Naive thymus-derived CD4-positive, alpha-beta T cell (primary cell): ENCODE measurements at regions of chr3 and their contacts with region 1.

Region 1: DNA sequence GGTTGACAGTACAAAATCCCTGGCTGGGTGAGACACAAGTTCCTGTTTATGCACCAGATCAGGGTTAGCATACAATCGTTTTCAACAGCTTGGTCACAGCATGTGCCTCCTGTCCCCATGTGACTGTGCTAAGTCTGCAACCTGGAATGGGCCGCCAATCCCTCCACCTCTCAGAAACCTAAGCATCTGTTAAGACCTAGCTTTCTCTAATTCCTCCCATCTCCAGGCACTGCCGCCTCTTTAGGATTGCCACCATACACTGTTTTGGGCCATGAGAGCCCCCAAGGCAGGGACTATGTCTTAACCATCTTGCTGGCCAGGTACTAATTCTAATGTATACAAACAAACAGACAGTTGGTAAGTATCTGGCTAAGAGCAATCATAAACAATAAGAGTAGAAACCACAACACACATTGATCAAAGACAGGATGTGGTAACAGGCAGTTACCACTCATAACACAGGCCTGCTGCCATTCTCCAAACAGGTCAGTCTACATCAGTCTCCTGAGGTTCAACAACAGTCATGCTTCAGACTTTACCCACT is 25.6 kb downstream of the SEC22C start:
- DNase-seq: peak in 8 of 9 donors; percentile 33 to 80 (median 70)
- ATAC-seq: peak; percentile 88
- H3K4me3 ChIP-seq: peak overlapping the region; percentile 4
- H3K4me3 Mint-ChIP-seq: peak overlapping the region; percentile 29 to 85 (median 55)
- H3K27ac ChIP-seq: peak overlapping the region; percentile 50
- H3K27ac Mint-ChIP-seq: peak overlapping the region; percentile 90 to 100 (median 95)
- H3K4me1 ChIP-seq: peaks cover 23 to 28% of the 10 kb centered on the region in 2 donors
- H3K4me1 Mint-ChIP-seq: peaks cover 19 to 47% (median 40%) of the 10 kb centered on the region in 7 donors
- H3K27me3 ChIP-seq: no peaks in the 10 kb centered on the region
- H3K27me3 Mint-ChIP-seq: no peaks in the 10 kb centered on the region

Region 2: GRCh38 chr3:41893977-41894376 is 662.2 kb before region 1 on chr3:
- CTCF ChIA-PET with region 1: no interaction called
- POLR2A ChIA-PET with region 1: no interaction called
- intact Hi-C with region 1: loop called in 1 of 2 experiments (anchors 2 kb)
- DNase-seq: peak in 6 of 9 donors; percentile 9 to 34 (median 17)
- ATAC-seq: no peak
- H3K4me3 ChIP-seq: no peak overlapping the region
- H3K4me3 Mint-ChIP-seq: no peak overlapping the region
- H3K27ac ChIP-seq: no peak overlapping the region
- H3K27ac Mint-ChIP-seq: no peak overlapping the region
- H3K4me1 ChIP-seq: no peaks in the 10 kb centered on the region
- H3K4me1 Mint-ChIP-seq: peaks cover 0 to 6% (median 0%) of the 10 kb centered on the region in 7 donors
- H3K27me3 ChIP-seq: no peaks in the 10 kb centered on the region
- H3K27me3 Mint-ChIP-seq: no peaks in the 10 kb centered on the region

Region 3: DNA sequence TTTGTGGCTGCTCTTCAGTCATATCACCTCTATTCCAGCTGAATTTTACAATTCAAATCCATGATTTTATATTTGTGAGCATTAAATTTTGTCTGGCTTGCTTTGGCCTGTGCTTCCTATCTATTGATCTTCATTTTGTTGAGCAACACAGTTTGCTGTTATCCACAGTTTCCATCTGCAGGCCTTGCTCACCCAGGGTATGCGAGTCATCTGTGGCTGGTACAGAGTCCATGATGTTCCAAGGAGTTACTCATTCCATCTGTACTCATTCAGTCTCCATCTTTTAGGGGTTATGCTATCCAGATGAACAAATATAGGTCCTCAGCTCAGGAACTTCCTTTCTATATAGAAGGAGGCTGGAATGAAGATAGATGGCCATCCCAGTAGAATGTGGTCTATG is 220.1 kb before region 1 on chr3:
- CTCF ChIA-PET with region 1: no interaction called
- POLR2A ChIA-PET with region 1: no interaction called
- intact Hi-C with region 1: no loop called
- DNase-seq: no peak
- ATAC-seq: no peak
- H3K4me3 ChIP-seq: no peak overlapping the region
- H3K4me3 Mint-ChIP-seq: no peak overlapping the region
- H3K27ac ChIP-seq: no peak overlapping the region
- H3K27ac Mint-ChIP-seq: no peak overlapping the region
- H3K4me1 ChIP-seq: no peaks in the 10 kb centered on the region
- H3K4me1 Mint-ChIP-seq: no peaks in the 10 kb centered on the region
- H3K27me3 ChIP-seq: no peaks in the 10 kb centered on the region
- H3K27me3 Mint-ChIP-seq: peaks cover 0 to 25% (median 0%) of the 10 kb centered on the region in 5 donors

Region 4: GRCh38 chr3:42443819-42444436 is 112.2 kb before region 1 on chr3:
- CTCF ChIA-PET with region 1: no interaction called
- POLR2A ChIA-PET with region 1: no interaction called
- intact Hi-C with region 1: loop called (anchors 1 to 5 kb)
- DNase-seq: peak; percentile 46 to 78 (median 73)
- ATAC-seq: peak; percentile 88
- H3K4me3 ChIP-seq: no peak overlapping the region
- H3K4me3 Mint-ChIP-seq: no peak overlapping the region
- H3K27ac ChIP-seq: no peak overlapping the region
- H3K27ac Mint-ChIP-seq: no peak overlapping the region
- H3K4me1 ChIP-seq: no peaks in the 10 kb centered on the region
- H3K4me1 Mint-ChIP-seq: peaks cover 0 to 3% (median 0%) of the 10 kb centered on the region in 7 donors
- H3K27me3 ChIP-seq: no peaks in the 10 kb centered on the region
- H3K27me3 Mint-ChIP-seq: peaks cover 0 to 16% (median 4%) of the 10 kb centered on the region in 5 donors

Region 5: GRCh38 chr3:42539869-42540714 is 16.1 kb before region 1 on chr3:
- CTCF ChIA-PET with region 1: interaction called, 15 read pairs
- POLR2A ChIA-PET with region 1: interaction called, 3 read pairs
- intact Hi-C with region 1: loop called in 1 of 2 experiments (anchors 1 kb)
- DNase-seq: peak in 8 of 9 donors; percentile 31 to 69 (median 48)
- ATAC-seq: peak; percentile 76
- H3K4me3 ChIP-seq: no peak overlapping the region
- H3K4me3 Mint-ChIP-seq: no peak overlapping the region
- H3K27ac ChIP-seq: no peak overlapping the region
- H3K27ac Mint-ChIP-seq: peak overlapping the region in 7 of 9 donors; percentile 33 to 95 (median 67)
- H3K4me1 ChIP-seq: peaks cover 0 to 9% of the 10 kb centered on the region in 2 donors
- H3K4me1 Mint-ChIP-seq: peaks cover 2 to 36% (median 31%) of the 10 kb centered on the region in 7 donors
- H3K27me3 ChIP-seq: no peaks in the 10 kb centered on the region
- H3K27me3 Mint-ChIP-seq: no peaks in the 10 kb centered on the region

Region 6: DNA sequence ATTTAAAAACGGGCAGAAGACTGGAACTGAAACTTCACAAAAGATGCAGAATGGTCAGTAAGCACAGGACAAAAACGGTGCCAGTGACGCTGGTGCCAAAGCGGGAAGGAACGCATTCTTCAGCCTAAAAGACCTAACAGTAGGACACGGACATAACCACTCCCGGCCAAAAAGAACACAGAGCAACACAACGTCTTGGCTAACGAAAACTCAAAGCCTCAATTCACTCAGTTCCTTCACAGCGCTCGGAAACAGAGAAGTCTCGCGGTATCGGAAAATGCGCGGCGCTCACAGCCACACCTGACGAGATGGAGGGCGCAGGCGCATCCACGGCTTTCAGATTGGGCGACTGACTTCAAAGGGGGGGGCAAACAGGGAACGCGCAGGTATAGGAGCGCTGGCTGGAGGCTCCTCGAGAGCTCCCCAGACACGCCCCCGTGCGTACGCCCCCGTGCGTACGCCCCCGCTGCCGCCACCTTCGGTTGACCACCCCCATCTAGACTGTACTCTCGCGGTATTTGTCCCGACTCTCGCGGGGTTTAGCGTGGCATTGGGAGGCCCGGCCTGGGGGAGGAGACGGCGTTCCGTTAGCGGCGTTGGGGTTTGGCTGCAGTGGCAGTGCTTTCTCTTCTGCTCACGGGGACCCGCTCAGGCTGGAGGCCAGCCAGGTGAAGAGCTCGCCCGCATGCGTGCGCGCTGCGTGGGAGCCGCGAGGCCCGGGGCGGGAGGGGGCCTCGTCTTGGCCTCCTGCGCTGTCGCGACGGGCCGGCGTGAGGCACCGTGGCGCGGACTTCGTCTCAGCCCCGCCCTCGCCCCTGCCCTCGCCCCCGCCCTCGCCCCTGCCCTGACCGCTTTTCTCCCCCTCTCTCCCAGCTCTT is 44.2 kb after region 1 on chr3 and contains the start of gene NKTR:
- CTCF ChIA-PET with region 1: no interaction called
- POLR2A ChIA-PET with region 1: interaction called, 5 read pairs
- intact Hi-C with region 1: loop called (anchors 1 kb)
- DNase-seq: peak; percentile 98 to 100 (median 100)
- ATAC-seq: peak; percentile 97
- H3K4me3 ChIP-seq: peak within 1 kb of the TSS; percentile 75
- H3K4me3 Mint-ChIP-seq: peak within 1 kb of the TSS; percentile 91 to 98 (median 95)
- H3K27ac ChIP-seq: peak within 1 kb of the TSS; percentile 93
- H3K27ac Mint-ChIP-seq: peak within 1 kb of the TSS; percentile 95 to 99 (median 98)
- H3K4me1 ChIP-seq: peaks cover 11 to 25% of the 10 kb centered on the region in 2 donors
- H3K4me1 Mint-ChIP-seq: peaks cover 26 to 53% (median 43%) of the 10 kb centered on the region in 7 donors
- H3K27me3 ChIP-seq: no peaks in the 10 kb centered on the region
- H3K27me3 Mint-ChIP-seq: peaks cover 0 to 2% (median 0%) of the 10 kb centered on the region in 5 donors
- total RNA-seq, gene NKTR: 110 to 275 (median 238) TPM

Region 7: DNA sequence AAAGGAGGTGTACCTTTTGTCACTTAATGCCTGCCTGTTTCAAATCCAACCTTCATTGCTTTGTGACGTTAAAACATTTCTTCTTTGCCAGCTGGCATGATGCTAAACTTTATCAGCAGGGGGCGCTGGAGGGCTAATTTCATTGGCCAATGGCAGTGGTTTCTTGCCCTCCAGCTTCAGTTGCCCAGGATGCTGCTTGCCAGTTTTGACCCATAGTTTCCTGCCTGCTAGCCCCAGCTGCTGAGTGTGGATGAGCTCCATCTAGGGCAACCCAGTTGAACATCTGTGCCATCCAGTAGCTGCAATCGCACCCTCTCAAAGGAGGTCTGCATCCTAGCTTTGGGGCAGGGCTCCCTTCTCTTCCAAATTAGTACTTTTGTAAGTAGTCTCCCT is 275.2 kb after region 1 on chr3:
- CTCF ChIA-PET with region 1: no interaction called
- POLR2A ChIA-PET with region 1: no interaction called
- intact Hi-C with region 1: no loop called
- DNase-seq: peak; percentile 45 to 71 (median 65)
- ATAC-seq: peak; percentile 81
- H3K4me3 ChIP-seq: no peak overlapping the region
- H3K4me3 Mint-ChIP-seq: no peak overlapping the region
- H3K27ac ChIP-seq: no peak overlapping the region
- H3K27ac Mint-ChIP-seq: peak overlapping the region in 1 of 9 donors; percentile 12
- H3K4me1 ChIP-seq: no peaks in the 10 kb centered on the region
- H3K4me1 Mint-ChIP-seq: peaks cover 0 to 14% (median 5%) of the 10 kb centered on the region in 7 donors
- H3K27me3 ChIP-seq: no peaks in the 10 kb centered on the region
- H3K27me3 Mint-ChIP-seq: peaks cover 0 to 18% (median 4%) of the 10 kb centered on the region in 5 donors

Region 8: DNA sequence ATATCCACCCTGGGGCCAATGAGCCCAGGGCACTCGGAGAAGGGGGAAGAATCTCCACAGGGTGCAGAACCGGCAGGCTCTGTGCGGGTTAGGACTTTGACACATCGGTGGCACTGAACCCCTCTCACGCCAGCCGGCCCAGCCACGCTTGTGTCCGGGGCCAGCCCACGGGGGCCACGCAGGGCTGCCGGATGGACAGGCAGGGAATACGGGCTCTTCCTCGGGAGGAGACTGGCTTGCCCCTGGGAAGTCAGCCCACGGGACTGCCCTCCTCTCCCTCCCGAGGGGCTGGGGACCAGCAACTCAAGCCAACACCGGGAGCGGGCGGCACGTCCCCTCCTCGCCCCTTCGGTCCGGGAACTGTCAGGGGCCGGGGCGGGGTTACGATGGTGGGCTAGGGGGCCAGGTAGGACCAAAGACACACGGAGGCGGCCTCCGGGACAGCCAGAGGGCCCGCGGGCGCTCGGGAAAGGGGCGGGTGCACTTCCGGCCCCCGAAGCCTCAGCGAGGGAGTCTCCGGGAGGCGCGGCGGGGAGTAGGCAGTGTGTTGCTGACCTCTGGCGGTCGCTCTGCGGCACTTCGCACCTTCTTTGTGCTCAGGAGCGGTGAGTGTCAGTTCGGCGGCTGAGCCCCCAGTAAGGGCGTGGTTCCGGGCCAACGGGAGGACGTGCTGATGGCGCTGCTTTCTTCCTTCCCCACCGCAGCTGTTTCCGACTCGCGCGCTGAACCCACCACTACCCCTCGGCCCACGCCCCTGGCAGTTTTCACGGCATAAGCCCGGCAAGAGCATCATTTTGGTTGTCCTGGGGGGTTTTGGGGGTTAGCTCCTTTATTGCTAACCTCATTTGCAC is 324.7 kb after region 1 on chr3:
- CTCF ChIA-PET with region 1: no interaction called
- POLR2A ChIA-PET with region 1: no interaction called
- intact Hi-C with region 1: loop called in 1 of 2 experiments (anchors 5 kb)
- DNase-seq: peak; percentile 66 to 87 (median 83)
- ATAC-seq: peak; percentile 99
- H3K4me3 ChIP-seq: peak overlapping the region; percentile 64
- H3K4me3 Mint-ChIP-seq: peak overlapping the region; percentile 76 to 89 (median 85)
- H3K27ac ChIP-seq: peak overlapping the region; percentile 57
- H3K27ac Mint-ChIP-seq: peak overlapping the region; percentile 55 to 97 (median 82)
- H3K4me1 ChIP-seq: peaks cover 4 to 13% of the 10 kb centered on the region in 2 donors
- H3K4me1 Mint-ChIP-seq: peaks cover 6 to 17% (median 15%) of the 10 kb centered on the region in 7 donors
- H3K27me3 ChIP-seq: no peaks in the 10 kb centered on the region
- H3K27me3 Mint-ChIP-seq: peaks cover 0 to 25% (median 0%) of the 10 kb centered on the region in 5 donors